IMR-90 (cell line): ENCODE measurements at regions of chr1 and their contacts with region 1.

Region 1: GRCh38 chr1:203368624-203369451 is 17.9 kb upstream of the FMOD start:
- DNase-seq: peak; percentile 69
- ATAC-seq: peak; percentile 79
- H3K4me3 ChIP-seq: no peak overlapping the region
- H3K27ac ChIP-seq: no peak overlapping the region; the same call in 1 of the 2 replicates
- H3K4me1 ChIP-seq: peaks cover 15% of the 10 kb centered on the region
- H3K27me3 ChIP-seq: peaks cover 9% of the 10 kb centered on the region
- CTCF ChIP-seq: peak; percentile 59
- POLR2A ChIP-seq: no peak
- RAD21 ChIP-seq: peak; percentile 61

Region 2: GRCh38 chr1:203304919-203305808 is 63.7 kb before region 1 on chr1 and contains the start of gene BTG2:
- CTCF ChIA-PET with region 1: no interaction called
- POLR2A ChIA-PET with region 1: interaction called, 13 read pairs
- dilution Hi-C with region 1: no loop called
- in situ Hi-C with region 1: no loop called
- intact Hi-C with region 1: no loop called
- DNase-seq: peak; percentile 86
- ATAC-seq: peak; percentile 95
- H3K4me3 ChIP-seq: peak within 1 kb of the TSS; percentile 62
- H3K27ac ChIP-seq: peak within 1 kb of the TSS; percentile 81
- H3K4me1 ChIP-seq: peaks cover 7% of the 10 kb centered on the region
- H3K27me3 ChIP-seq: peaks cover 15% of the 10 kb centered on the region
- CTCF ChIP-seq: no peak
- POLR2A ChIP-seq: peak; percentile 99
- RAD21 ChIP-seq: no peak
- total RNA-seq, gene BTG2: 8.4 and 10.3 TPM in 2 replicates

Region 3: GRCh38 chr1:203440771-203441170 is 71.9 kb after region 1 on chr1:
- CTCF ChIA-PET with region 1: interaction called, 3 read pairs
- POLR2A ChIA-PET with region 1: interaction called, 3 read pairs
- dilution Hi-C with region 1: no loop called
- in situ Hi-C with region 1: no loop called
- intact Hi-C with region 1: loop called (anchors 1 kb)
- DNase-seq: peak; percentile 72
- ATAC-seq: peak; percentile 99
- H3K4me3 ChIP-seq: no peak overlapping the region
- H3K27ac ChIP-seq: no peak overlapping the region
- H3K4me1 ChIP-seq: peaks cover 7% of the 10 kb centered on the region; the same call in 1 of the 2 replicates
- H3K27me3 ChIP-seq: peaks cover 24% of the 10 kb centered on the region
- CTCF ChIP-seq: peak; percentile 73
- POLR2A ChIP-seq: no peak
- RAD21 ChIP-seq: peak; percentile 85

Region 4: GRCh38 chr1:203486618-203487370 is 118.0 kb after region 1 on chr1:
- CTCF ChIA-PET with region 1: no interaction called
- POLR2A ChIA-PET with region 1: no interaction called
- dilution Hi-C with region 1: no loop called
- in situ Hi-C with region 1: no loop called
- intact Hi-C with region 1: loop called (anchors 1 kb)
- DNase-seq: no peak
- ATAC-seq: no peak
- H3K4me3 ChIP-seq: no peak overlapping the region
- H3K27ac ChIP-seq: peak overlapping the region; percentile 72
- H3K4me1 ChIP-seq: peaks cover 3% of the 10 kb centered on the region; the same call in 1 of the 2 replicates
- H3K27me3 ChIP-seq: no peaks in the 10 kb centered on the region
- CTCF ChIP-seq: no peak
- POLR2A ChIP-seq: no peak
- RAD21 ChIP-seq: no peak

Region 5: DNA sequence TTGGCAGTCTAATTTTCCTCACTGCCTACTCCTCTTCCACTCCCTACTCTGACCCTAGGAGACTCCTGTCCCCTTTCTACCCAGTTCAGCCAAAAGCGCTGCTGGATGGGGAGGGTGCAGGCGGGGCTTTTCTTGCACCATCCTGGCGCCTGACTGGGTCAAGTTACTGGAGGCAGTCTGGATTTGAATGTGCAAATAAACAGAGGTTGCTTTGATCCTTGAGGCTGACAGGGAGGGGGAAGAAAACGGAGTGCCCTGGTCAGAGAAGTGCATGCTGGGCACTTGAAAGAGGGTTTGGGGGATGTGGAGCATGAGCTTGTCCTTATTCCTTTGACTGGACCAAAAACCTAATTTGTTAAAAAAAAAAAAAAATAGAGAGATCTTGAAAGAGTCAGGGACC is 627.3 kb after region 1 on chr1:
- CTCF ChIA-PET with region 1: no interaction called
- POLR2A ChIA-PET with region 1: no interaction called
- dilution Hi-C with region 1: no loop called
- in situ Hi-C with region 1: no loop called
- intact Hi-C with region 1: no loop called
- DNase-seq: no peak
- ATAC-seq: peak; percentile 63
- H3K4me3 ChIP-seq: no peak overlapping the region
- H3K27ac ChIP-seq: no peak overlapping the region
- H3K4me1 ChIP-seq: no peaks in the 10 kb centered on the region
- H3K27me3 ChIP-seq: peaks cover 17% of the 10 kb centered on the region
- CTCF ChIP-seq: no peak
- POLR2A ChIP-seq: no peak
- RAD21 ChIP-seq: no peak